Esophagus squamous epithelium (tissue), 5 donors: ENCODE measurements at regions of chr19 and their contacts with region 1.

Region 1: DNA sequence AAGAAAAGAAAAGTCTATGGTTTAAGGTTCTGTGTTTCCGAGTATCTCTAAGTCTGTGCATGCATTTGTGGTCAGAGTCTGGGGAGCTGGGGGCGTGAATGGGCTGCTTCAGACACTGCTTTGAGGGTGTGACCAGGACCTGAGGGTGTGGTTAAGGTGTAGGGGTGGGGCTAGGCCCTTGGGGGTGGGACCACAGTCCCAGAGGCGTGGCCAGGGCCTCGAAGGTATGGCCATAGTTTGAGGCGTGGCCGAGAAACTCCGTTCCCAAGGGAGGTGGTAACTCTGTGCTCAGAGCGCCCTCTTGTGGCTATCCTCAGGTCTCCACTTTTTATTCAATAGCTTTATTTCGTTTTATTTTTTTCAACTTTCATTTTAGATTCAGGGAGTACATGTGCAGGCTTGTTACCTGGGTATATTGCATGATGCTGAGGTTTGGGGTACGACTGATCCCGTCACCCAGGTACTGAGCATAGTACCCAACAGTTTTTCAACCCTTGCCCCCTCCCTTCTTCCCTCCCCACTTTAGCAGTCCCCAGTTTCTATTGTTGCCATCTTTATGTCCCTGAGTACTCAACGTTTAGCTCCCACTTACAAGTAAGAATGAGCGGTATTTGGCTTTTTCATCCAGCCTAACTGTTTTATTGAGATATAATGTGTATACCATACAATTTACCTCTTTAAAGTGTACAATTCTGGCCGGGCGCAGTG is 7.0 kb upstream of the CBLC start:
- DNase-seq: peak; percentile 83
- H3K4me3 ChIP-seq: peak overlapping the region in 1 of 4 donors; percentile 28
- H3K27ac ChIP-seq: peak overlapping the region in 3 of 4 donors; percentile 44 to 67 (median 48)
- H3K4me1 ChIP-seq: peaks cover 4 to 35% (median 16%) of the 10 kb centered on the region in 3 donors
- H3K27me3 ChIP-seq: no peaks in the 10 kb centered on the region
- CTCF ChIP-seq: peak; percentile 82 to 96 (median 92)
- POLR2A ChIP-seq: no peak

Region 2: GRCh38 chr19:44635581-44636438 is 134.9 kb before region 1 on chr19:
- intact Hi-C with region 1: no loop called
- DNase-seq: no peak
- H3K4me3 ChIP-seq: no peak overlapping the region
- H3K27ac ChIP-seq: no peak overlapping the region
- H3K4me1 ChIP-seq: no peaks in the 10 kb centered on the region
- H3K27me3 ChIP-seq: peaks cover 0 to 4% (median 0%) of the 10 kb centered on the region in 4 donors
- CTCF ChIP-seq: no peak
- POLR2A ChIP-seq: no peak

Region 3: GRCh38 chr19:44723952-44724319 is 46.8 kb before region 1 on chr19:
- intact Hi-C with region 1: loop called (anchors 5 kb)
- DNase-seq: no peak
- H3K4me3 ChIP-seq: no peak overlapping the region
- H3K27ac ChIP-seq: peak overlapping the region; percentile 24 to 68 (median 44)
- H3K4me1 ChIP-seq: peaks cover 27 to 60% (median 45%) of the 10 kb centered on the region in 3 donors
- H3K27me3 ChIP-seq: no peaks in the 10 kb centered on the region
- CTCF ChIP-seq: peak; percentile 97 to 99 (median 98)
- POLR2A ChIP-seq: no peak